Activated T-helper 1 cell treated with anti-CD3 and anti-CD28 coated beads, Interleukin-12 subunit alpha, Interleukin-12 subunit beta, Interleukin-2, Interleukin-4 antibody, amounts not matched to agents 30 ng/mL and 10 ng/mL and 1 ng/mL, durations not matched to agents 14 hours and 24 hours and 36 hours (primary cell): ENCODE measurements at regions of chr9 and their contacts with region 1.

Region 1: GRCh38 chr9:69193685-69194032 is 19.6 kb downstream of the TJP2 start:
- DNase-seq: no peak
- H3K4me3 Mint-ChIP-seq: no peak overlapping the region
- H3K27ac Mint-ChIP-seq: no peak overlapping the region
- H3K4me1 Mint-ChIP-seq: peaks cover 28% of the 10 kb centered on the region
- H3K27me3 Mint-ChIP-seq: peaks cover 1% of the 10 kb centered on the region

Region 2: DNA sequence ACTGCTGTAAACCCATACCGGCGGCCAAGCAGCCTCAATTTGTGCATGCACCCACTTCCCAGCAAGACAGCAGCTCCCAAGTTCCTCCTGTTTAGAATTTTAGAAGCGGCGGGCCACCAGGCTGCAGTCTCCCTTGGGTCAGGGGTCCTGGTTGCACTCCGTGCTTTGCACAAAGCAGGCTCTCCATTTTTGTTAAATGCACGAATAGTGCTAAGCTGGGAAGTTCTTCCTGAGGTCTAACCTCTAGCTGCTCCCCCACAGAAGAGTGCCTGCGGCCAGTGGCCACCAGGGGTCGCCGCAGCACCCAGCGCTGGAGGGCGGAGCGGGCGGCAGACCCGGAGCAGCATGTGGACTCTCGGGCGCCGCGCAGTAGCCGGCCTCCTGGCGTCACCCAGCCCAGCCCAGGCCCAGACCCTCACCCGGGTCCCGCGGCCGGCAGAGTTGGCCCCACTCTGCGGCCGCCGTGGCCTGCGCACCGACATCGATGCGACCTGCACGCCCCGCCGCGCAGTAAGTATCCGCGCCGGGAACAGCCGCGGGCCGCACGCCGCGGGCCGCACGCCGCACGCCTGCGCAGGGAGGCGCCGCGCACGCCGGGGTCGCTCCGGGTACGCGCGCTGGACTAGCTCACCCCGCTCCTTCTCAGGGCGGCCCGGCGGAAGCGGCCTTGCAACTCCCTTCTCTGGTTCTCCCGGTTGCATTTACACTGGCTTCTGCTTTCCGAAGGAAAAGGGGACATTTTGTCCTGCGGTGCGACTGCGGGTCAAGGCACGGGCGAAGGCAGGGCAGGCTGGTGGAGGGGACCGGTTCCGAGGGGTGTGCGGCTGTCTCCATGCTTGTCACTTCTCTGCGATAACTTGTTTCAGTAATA is 158.0 kb before region 1 on chr9 and contains the start of gene FXN:
- intact Hi-C with region 1: loop called (anchors 1 kb)
- DNase-seq: peak; percentile 78
- H3K4me3 Mint-ChIP-seq: peak within 1 kb of the TSS; percentile 88
- H3K27ac Mint-ChIP-seq: peak within 1 kb of the TSS; percentile 78
- H3K4me1 Mint-ChIP-seq: peaks cover 15% of the 10 kb centered on the region
- H3K27me3 Mint-ChIP-seq: no peaks in the 10 kb centered on the region
- total RNA-seq, gene FXN: 43.6 and 47.7 TPM in 2 replicates

Region 3: DNA sequence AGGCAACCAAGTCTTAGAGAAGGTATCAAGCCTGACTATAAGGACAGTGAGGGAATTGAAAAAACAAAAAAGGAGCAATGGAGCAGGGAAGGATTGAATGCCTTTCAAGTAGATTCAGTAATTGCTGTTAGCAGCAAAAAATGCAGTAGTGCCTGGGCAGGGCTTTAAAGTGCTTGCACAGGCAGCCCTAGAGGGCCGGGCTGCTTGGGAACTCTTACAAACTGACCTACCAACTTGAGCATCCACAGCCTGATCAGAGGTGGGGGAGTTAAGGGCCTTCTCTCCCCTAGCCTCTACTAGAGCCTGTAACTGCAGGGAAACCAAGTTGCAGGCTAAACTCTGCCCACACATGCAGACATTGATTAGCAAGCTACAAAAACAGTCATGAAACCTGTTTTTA is 138.7 kb before region 1 on chr9:
- intact Hi-C with region 1: loop called (anchors 1 kb)
- DNase-seq: no peak
- H3K4me3 Mint-ChIP-seq: no peak overlapping the region
- H3K27ac Mint-ChIP-seq: no peak overlapping the region
- H3K4me1 Mint-ChIP-seq: peaks cover 3% of the 10 kb centered on the region
- H3K27me3 Mint-ChIP-seq: no peaks in the 10 kb centered on the region

Region 4: GRCh38 chr9:69121828-69122548 is 71.7 kb before region 1 on chr9:
- intact Hi-C with region 1: loop called (anchors 2 kb)
- DNase-seq: peak; percentile 31
- H3K4me3 Mint-ChIP-seq: peak overlapping the region; percentile 87
- H3K27ac Mint-ChIP-seq: no peak overlapping the region
- H3K4me1 Mint-ChIP-seq: peaks cover 15% of the 10 kb centered on the region
- H3K27me3 Mint-ChIP-seq: peaks cover 12% of the 10 kb centered on the region

Region 5: DNA sequence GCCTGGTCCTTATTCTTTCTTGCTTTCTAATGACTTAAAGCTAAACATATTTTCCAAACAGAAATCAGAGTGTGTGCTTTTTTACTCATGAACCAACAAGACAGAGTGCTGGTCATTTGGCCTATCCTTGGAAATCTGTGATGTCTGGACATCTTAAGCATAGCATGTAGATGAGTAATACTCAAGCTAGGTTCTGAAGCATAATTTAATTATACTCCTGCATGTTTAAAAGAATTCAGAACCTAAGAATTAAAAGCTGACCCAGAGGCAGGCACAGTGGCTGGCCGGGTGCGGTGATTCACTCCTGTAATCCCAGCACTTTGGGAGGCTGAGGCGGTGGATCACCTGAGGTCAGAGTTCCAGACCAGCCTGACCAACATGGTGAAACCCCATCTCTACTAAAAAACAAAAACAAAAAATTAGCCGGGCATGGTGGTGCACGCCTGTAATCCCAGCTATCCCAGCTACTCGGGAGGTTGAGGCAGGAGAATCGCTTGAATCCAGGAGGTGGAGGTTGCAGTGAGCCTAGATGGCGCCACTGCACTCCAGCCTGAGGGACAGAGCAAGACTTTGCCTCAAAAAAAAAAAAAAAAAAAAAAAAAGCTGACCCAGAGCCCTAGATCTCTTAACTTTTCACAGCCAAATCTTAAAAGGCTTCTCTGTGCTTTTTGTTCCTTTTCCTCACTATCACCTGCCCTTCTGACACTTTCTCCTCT is 35.8 kb before region 1 on chr9:
- intact Hi-C with region 1: loop called (anchors 1 kb)
- DNase-seq: no peak
- H3K4me3 Mint-ChIP-seq: no peak overlapping the region
- H3K27ac Mint-ChIP-seq: no peak overlapping the region
- H3K4me1 Mint-ChIP-seq: no peaks in the 10 kb centered on the region
- H3K27me3 Mint-ChIP-seq: no peaks in the 10 kb centered on the region

Region 6: DNA sequence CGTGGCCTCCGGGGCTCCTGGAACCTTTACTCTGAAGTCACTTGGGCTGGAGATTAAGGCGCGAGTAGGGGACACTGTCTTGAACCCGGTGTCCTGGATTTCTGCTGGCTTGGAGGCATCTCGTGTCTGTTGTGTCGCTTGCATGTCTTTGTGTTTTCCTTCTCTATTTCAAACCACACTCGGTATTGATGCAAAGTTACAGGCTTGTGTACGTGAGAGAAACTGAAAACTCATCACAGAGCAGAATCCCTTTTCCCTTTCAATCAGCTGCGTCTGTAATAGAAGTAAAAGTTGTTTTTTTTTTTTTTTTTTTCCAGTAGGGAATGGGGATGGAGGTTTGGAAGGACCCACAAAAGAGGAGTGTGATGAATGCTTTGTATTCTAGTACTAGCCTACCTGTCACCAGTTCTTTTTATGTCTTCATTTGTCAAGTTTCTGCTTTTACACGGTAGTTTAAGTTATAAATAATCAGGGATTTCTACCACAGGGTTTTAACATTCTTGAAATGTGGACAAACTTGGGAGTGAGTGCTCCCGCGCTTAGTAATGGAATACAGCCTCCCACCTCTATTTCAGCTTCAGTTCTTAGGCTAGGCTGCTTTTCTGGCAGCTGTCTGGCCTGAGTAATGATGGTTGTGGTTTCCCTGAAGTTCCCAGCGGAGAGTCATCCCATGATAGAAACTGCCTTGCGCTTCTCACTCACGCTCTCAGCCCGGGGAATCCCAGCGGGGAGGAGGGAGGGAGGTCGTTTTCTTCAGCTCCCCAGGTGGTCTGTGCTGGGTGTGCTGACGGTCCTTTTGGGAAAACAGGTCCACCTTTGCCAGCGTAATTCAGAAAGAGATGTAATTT is 18.8 kb before region 1 on chr9:
- intact Hi-C with region 1: loop called (anchors 2 kb)
- DNase-seq: peak; percentile 21
- H3K4me3 Mint-ChIP-seq: peak overlapping the region; percentile 82
- H3K27ac Mint-ChIP-seq: peak overlapping the region; percentile 69
- H3K4me1 Mint-ChIP-seq: peaks cover 70% of the 10 kb centered on the region
- H3K27me3 Mint-ChIP-seq: peaks cover 18% of the 10 kb centered on the region